ENCODE measurements at regions of chr12 and their contacts with region 1.

Region 1: GRCh38 chr12:101830367-101831325 is at the start of gene GNPTAB:
- DNase-seq: peak; percentile 92
- H3K4me3 Mint-ChIP-seq: peak within 1 kb of the TSS; percentile 98
- H3K27ac Mint-ChIP-seq: peak within 1 kb of the TSS; percentile 92
- H3K4me1 Mint-ChIP-seq: peaks cover 39% of the 10 kb centered on the region
- H3K27me3 Mint-ChIP-seq: no peaks in the 10 kb centered on the region
- total RNA-seq, gene GNPTAB: 93.6 and 100 TPM in 2 replicates

Region 2: DNA sequence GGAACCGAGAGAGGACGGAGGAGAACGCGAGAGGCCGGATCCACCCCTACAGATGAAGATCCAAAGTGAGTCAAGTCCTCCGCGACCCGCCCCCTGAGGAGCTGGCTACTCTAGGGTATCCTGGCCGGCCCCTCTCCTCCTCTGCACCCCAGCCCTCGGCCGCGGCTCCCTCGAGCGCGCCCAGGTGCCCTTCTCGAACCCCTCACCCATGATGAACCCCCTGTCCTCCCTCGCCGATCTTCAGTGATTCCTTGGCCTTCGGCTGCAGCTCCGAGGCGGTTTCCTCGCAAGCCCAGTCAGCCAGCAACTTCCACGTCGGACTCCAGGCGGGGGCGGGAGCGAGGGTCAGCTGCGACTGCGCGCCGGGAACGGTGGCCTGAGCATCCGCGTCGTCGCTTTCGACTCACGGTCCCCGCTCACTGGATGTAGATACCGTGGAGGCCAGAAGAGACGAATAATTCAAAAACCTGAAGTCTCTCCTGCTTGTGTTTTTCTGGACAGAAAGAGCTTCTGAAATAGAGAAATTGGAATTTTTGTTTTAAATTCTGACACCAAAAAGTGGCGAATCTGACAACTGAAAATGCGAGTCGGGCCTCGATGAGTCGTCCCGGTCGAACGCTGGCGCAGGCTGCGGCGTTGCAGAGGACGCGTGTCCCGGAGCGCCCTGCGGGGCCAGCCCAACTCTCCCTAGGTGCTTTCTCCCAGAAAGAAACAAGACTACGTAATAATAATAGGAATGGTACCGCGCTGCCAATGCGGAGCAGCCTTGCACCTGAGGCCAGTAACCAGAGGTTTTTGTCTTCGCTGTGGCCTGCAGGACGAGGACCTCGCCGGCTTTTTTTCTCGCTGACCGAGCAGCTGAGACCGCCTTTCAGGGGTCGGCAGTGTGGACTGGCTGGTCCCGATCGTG is 423.0 kb before region 1 on chr12 and contains the start of gene ARL1:
- intact Hi-C with region 1: loop called (anchors 2 kb)
- DNase-seq: peak; percentile 65
- H3K4me3 Mint-ChIP-seq: peak within 1 kb of the TSS; percentile 95
- H3K27ac Mint-ChIP-seq: peak within 1 kb of the TSS; percentile 91
- H3K4me1 Mint-ChIP-seq: peaks cover 11% of the 10 kb centered on the region
- H3K27me3 Mint-ChIP-seq: peaks cover 10% of the 10 kb centered on the region
- total RNA-seq, gene ARL1: 74.2 and 77.5 TPM in 2 replicates

Region 3: GRCh38 chr12:101697197-101697929 is 133.3 kb before region 1 on chr12 and contains the start of gene CHPT1:
- intact Hi-C with region 1: loop called (anchors 5 kb)
- DNase-seq: peak; percentile 46
- H3K4me3 Mint-ChIP-seq: peak within 1 kb of the TSS; percentile 87
- H3K27ac Mint-ChIP-seq: peak within 1 kb of the TSS; percentile 73
- H3K4me1 Mint-ChIP-seq: peaks cover 19% of the 10 kb centered on the region
- H3K27me3 Mint-ChIP-seq: peaks cover 6% of the 10 kb centered on the region
- total RNA-seq, gene CHPT1: 17.6 and 18.3 TPM in 2 replicates

Region 4: DNA sequence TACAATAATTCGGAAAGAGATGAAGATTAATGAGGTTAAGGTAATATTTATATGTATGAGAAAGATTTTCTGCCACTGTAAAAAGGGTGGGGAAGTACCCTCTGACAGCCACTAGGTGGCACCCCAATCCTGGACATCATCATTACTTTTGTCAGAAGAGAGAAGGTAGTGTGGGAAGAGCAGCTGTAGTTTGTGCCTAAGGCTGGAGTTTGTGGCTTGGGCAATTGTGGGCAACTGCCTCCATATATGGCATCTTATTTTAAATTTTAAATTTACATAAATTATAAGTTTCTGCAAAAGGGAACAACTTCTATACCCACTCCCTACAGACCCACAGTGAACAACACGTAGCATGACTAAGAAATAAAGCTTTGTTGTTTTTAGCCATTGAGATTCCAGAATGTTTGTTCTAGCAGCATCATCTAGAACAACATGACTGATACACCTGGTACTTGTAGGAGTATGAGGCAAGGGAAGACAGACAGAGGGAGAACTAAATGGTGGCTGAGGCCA is 56.9 kb before region 1 on chr12:
- intact Hi-C with region 1: loop called (anchors 1 kb)
- DNase-seq: peak; percentile 52
- H3K4me3 Mint-ChIP-seq: no peak overlapping the region
- H3K27ac Mint-ChIP-seq: peak overlapping the region; percentile 48
- H3K4me1 Mint-ChIP-seq: peaks cover 41% of the 10 kb centered on the region
- H3K27me3 Mint-ChIP-seq: no peaks in the 10 kb centered on the region

Region 5: GRCh38 chr12:101782273-101782731 is 48.3 kb before region 1 on chr12:
- intact Hi-C with region 1: loop called (anchors 2 kb)
- DNase-seq: no peak
- H3K4me3 Mint-ChIP-seq: peak overlapping the region; percentile 0
- H3K27ac Mint-ChIP-seq: peak overlapping the region; percentile 92
- H3K4me1 Mint-ChIP-seq: peaks cover 66% of the 10 kb centered on the region
- H3K27me3 Mint-ChIP-seq: no peaks in the 10 kb centered on the region

Region 6: DNA sequence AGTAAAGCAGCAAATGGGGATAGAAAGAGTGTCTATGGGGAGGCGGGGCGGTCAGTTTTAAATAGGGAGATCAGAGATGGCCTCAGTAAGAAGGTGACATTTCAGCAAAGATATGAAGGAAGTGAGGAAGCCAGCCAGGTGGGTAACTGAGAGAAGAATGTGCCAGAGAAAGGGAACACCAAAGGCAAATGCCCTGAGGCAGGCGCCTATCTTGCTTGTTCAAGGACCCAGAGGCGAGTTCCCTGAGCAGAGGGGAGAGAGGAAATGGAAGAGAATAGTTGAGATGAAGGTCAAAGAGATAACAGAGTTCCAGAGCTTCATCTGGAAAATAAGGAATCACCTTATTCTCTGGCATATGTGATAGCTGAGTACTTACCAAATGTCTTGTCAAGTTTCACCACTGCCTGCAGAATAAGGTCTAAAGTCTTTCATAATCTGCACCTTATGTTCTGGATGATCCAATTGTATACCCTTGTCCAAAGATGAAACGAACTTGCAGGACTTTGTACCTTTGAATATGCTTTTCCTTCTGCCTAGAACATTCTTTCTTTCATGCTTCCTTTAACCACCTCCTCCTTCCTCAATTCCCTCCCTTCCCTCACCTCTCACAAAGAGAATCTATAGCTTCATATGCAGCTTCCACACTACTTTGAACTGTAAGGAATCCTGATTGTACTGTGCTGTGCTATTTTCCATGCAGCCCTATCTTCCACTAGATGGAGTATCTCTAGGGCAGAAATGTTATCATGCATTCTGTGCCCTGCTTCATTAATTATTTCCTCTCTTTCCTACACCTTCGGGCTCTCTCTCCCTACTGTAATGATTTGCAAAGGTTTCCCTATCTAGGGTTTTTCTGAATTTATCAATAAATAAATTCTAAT is 38.4 kb before region 1 on chr12:
- intact Hi-C with region 1: loop called (anchors 1 kb)
- DNase-seq: no peak
- H3K4me3 Mint-ChIP-seq: no peak overlapping the region
- H3K27ac Mint-ChIP-seq: peak overlapping the region; percentile 79
- H3K4me1 Mint-ChIP-seq: peaks cover 50% of the 10 kb centered on the region
- H3K27me3 Mint-ChIP-seq: no peaks in the 10 kb centered on the region

Region 7: GRCh38 chr12:101850199-101850598 is 19.6 kb after region 1 on chr12:
- intact Hi-C with region 1: no loop called
- DNase-seq: no peak
- H3K4me3 Mint-ChIP-seq: no peak overlapping the region
- H3K27ac Mint-ChIP-seq: no peak overlapping the region
- H3K4me1 Mint-ChIP-seq: peaks cover 7% of the 10 kb centered on the region
- H3K27me3 Mint-ChIP-seq: no peaks in the 10 kb centered on the region

Region 8: DNA sequence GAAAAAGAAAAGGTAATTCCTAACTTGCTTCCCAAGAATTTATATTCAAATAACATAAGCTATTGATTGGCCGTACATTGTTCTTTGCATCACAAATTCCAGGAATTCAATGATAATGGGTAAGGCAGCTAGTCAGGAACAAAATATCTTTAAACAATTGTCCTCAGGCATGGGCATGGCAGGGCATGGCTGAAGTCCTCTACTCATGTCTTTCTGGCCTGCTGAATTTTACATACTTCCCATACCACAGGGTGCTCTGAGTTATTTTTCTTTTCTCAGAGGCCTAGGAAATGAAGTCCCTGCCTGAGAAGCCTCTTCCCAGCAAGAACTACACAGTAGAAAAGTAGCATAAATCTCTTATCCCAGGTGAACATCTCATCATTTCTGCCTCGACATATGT is 31.6 kb after region 1 on chr12:
- intact Hi-C with region 1: no loop called
- DNase-seq: no peak
- H3K4me3 Mint-ChIP-seq: no peak overlapping the region
- H3K27ac Mint-ChIP-seq: no peak overlapping the region
- H3K4me1 Mint-ChIP-seq: peaks cover 31% of the 10 kb centered on the region
- H3K27me3 Mint-ChIP-seq: no peaks in the 10 kb centered on the region

Region 9: DNA sequence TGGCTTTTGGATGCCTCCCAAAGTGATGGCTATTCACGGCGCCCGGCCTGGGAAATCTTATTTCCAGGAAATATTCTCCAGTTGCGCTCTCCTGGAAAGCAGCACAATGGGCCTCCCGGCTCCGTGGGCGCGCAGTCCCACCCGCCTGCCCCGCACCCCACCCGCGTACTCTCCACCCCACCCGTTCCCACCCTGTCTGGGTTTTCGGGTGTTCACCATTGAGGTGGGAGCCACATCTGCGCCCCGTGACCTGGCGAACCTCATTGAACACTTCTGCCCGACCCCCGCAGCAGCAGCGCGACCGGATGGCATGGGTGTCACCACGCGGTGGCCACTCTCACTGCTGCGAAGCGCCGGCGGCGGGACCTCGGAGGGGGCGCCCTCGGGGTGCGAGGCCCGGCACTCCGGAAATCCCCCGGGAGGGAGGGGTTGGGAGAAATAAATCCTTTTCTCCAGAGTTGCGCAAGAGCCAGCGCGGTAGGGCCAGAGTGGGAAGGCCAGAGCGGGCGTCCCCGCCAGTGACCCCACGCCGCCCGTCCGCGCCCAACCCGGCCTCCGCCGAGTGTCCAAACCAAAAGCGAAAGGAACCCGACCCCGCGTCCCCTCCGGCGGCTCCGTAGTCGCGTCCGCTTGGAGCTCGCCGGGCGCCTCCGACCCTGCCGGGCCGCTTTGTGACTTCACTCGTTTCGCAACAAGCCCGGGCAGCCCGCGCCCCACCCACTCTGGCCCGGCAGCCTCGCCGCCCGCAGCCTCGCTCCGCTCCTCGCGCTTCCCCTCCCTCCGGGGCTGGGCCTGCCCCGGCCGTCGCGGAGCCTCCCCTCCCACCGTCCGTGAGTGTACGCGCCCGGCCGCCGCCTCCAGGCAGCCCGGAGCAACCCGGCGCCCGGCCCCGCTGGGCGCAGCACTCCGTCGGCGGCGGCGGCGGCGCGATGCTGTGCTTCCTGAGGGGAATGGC is 46.5 kb after region 1 on chr12 and contains the start of gene DRAM1:
- intact Hi-C with region 1: loop called (anchors 5 kb)
- DNase-seq: peak; percentile 73
- H3K4me3 Mint-ChIP-seq: peak within 1 kb of the TSS; percentile 91
- H3K27ac Mint-ChIP-seq: peak within 1 kb of the TSS; percentile 90
- H3K4me1 Mint-ChIP-seq: peaks cover 15% of the 10 kb centered on the region
- H3K27me3 Mint-ChIP-seq: peaks cover 12% of the 10 kb centered on the region
- total RNA-seq, gene DRAM1: 3.0 and 3.4 TPM in 2 replicates